Gastrocnemius medialis (tissue), 4 donors: ENCODE measurements at regions of chr2 and their contacts with region 1.

Region 1: DNA sequence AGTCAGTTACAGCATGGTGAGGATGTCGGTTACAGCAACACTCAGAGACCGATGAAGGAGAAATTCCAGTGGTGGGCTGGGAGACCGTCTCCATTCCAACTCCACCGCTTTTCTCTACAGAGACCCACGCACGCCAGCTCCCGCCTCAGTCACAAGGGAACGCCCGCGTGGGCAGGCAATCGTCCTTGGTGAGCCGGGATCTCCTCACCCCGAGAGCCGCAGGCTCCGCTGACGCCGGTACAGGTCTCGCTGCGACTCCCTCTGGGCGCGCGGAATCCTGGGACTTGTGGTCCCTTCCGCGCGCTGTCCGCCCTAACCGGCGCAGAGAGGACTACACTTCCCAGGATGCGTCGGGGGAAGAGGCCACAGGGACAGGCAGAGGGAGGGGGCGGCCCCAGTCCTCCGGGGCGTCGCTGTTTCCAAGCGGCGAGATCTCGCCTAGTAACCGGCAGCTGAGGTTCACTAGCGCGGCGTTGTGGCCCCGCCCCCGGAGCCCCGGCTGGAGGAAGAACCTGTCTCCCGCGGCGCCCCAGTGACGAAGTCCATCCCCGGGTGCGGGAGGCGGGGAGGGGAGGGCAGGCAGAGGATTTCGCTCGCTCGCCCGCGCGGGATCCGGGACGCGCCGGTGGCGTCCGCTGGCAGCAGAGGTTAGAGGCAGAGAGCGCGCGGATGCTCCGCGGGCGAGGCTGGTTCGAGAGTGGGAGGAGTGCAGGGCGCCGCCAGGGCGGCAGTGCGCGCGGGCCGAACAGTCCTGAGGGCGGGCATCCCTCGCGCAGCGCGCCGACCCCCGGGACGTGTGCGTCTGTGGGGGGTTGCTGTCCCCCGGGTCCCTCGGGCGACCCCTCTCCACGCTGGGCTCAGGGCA is at the start of gene EML6:
- DNase-seq: peak; percentile 97 to 98
- ATAC-seq: peak; percentile 96 to 98
- H3K4me3 ChIP-seq: peak within 1 kb of the TSS; percentile 60 to 88 (median 76)
- H3K27ac ChIP-seq: peak within 1 kb of the TSS; percentile 79 to 86 (median 82)
- H3K4me1 ChIP-seq: peaks cover 7 to 11% of the 10 kb centered on the region in 2 donors
- H3K27me3 ChIP-seq: no peaks in the 10 kb centered on the region
- CTCF ChIP-seq: peak in 3 of 5 experiments; percentile 6 to 35 (median 28)
- POLR2A ChIP-seq: peak; percentile 53 to 78
- total RNA-seq, gene EML6: 2.7 to 42.5 (median 11.9) TPM

Region 2: DNA sequence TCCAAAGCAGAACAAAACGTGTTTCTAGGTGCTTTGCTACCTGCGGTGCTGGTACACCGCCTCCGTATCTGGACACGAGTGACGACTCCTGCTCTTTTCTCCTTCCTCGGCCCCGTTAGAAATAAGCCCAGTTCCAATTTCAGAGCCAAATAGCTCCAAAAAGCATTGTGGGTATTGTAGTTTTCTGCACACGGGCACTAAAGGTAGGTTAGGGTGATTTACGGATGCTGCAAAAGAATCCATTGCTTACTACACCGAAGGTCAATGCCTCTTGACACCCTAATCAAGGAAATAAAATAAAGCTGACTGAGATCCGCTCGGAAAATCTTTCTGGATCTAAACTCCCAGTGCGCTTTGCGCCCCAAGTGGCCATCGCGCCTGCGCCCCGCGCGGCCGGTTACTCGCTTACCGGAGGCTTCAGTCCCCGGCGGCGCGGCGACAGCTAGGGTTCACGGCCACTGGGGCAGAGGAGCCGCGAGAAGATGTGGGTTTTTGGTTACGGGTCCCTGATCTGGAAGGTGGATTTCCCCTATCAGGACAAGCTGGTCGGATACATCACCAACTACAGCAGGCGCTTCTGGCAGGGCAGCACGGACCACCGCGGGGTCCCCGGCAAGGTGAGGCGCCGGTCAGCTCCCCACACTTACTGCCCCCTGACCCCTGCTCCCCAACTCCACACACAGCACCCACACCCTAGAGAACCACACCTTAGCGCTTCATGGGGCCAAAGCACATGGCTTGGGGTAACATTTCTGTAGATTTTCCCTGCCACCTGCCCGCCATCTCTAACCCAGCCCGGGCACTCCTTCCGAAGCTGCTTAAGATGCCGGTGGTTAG is 955.7 kb before region 1 on chr2 and contains the start of gene CHAC2:
- in situ Hi-C with region 1: no loop called
- intact Hi-C with region 1: loop called (anchors 10 kb)
- DNase-seq: peak; percentile 73 to 84
- ATAC-seq: peak; percentile 96 to 98
- H3K4me3 ChIP-seq: peak within 1 kb of the TSS; percentile 66 to 92 (median 71)
- H3K27ac ChIP-seq: peak within 1 kb of the TSS; percentile 82 to 89 (median 84)
- H3K4me1 ChIP-seq: peaks cover 6 to 14% of the 10 kb centered on the region in 2 donors
- H3K27me3 ChIP-seq: no peaks in the 10 kb centered on the region
- CTCF ChIP-seq: peak; percentile 23 to 69 (median 42)
- POLR2A ChIP-seq: peak; percentile 61 to 79
- total RNA-seq, gene CHAC2: 3.7 to 10.3 (median 6.0) TPM

Region 3: DNA sequence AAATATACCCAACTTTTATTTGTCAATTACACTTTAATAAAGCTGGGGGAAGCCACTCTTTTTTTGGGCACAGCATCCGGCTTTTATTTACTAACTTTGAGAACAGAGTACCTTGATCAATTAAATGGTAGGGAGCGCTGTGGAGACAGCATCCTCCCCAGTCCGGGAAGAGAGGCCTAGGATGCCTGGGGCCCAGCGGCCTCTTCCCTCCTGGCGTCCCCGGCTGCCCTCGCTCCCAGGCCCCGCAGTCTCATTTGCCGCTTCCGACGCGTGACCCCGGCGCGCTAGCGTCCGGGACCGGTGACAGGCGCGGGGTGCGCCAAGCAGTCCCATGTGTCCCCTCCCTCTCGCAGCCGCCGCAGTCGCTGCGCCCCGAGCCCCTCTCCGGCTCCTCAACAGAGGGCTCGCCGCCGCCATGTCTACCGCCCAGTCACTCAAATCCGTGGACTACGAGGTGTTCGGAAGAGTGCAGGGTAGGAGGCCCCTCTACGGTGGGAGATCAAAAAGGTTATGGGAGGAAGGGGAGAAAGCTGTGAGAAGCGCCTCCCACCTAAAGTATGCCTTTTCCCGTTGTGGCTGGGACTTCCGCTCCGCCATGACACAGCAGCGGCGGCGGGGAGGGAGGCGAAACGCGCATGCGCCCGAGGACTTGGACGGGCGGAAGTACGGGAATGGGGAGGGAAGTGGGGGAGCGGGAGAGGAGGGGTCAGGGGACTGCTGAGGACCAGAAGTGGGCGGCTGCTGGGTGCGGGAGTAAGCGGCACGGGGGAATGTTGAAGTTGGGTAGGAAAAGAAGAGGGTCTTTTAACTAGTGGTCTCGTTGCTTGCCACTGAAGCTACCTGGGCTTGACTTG is 607.9 kb before region 1 on chr2 and contains the start of gene ACYP2:
- in situ Hi-C with region 1: loop called in 1 of 4 experiments (anchors 25 kb)
- intact Hi-C with region 1: loop called (anchors 5 kb)
- DNase-seq: peak; percentile 94 to 95
- ATAC-seq: peak; percentile 96 to 98
- H3K4me3 ChIP-seq: peak within 1 kb of the TSS; percentile 70 to 89 (median 76)
- H3K27ac ChIP-seq: peak within 1 kb of the TSS; percentile 97 to 99 (median 98)
- H3K4me1 ChIP-seq: peaks cover 10 to 16% of the 10 kb centered on the region in 2 donors
- H3K27me3 ChIP-seq: no peaks in the 10 kb centered on the region
- CTCF ChIP-seq: no peak
- POLR2A ChIP-seq: peak; percentile 83 to 85
- total RNA-seq, gene ACYP2: 52.9 to 121 (median 107) TPM

Region 4: GRCh38 chr2:54176577-54176976 is 546.8 kb before region 1 on chr2:
- in situ Hi-C with region 1: loop called in 2 of 4 experiments (anchors 25 kb)
- intact Hi-C with region 1: no loop called
- DNase-seq: no peak
- ATAC-seq: peak in 1 of 2 donors; percentile 39
- H3K4me3 ChIP-seq: no peak overlapping the region
- H3K27ac ChIP-seq: no peak overlapping the region
- H3K4me1 ChIP-seq: no peaks in the 10 kb centered on the region
- H3K27me3 ChIP-seq: no peaks in the 10 kb centered on the region
- CTCF ChIP-seq: peak in 3 of 5 experiments; percentile 10 to 40 (median 25)
- POLR2A ChIP-seq: no peak

Region 5: DNA sequence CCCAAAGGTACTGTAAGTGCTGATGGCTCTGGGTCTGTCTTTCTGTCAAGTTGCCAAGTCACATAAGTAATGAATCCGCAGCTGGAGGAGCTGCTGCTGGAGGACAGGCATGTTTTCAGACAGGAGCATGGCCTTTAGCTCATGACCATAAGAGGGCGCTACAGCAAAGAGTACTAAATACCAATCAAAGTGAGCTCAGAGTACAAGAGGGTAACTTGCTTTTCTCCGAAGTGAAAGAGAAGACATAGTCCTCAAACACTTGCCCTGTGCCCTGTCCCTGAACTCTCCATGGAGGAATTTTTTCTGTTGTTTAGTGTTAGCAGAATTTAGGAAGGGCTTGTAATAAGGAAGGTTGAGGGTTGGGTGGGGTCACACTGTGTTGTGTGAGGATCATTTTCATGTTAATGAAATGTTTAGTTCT is 57.9 kb before region 1 on chr2:
- in situ Hi-C with region 1: no loop called
- intact Hi-C with region 1: no loop called
- DNase-seq: no peak
- ATAC-seq: peak in 1 of 2 donors; percentile 44
- H3K4me3 ChIP-seq: no peak overlapping the region
- H3K27ac ChIP-seq: peak overlapping the region; percentile 67 to 73 (median 71)
- H3K4me1 ChIP-seq: peaks cover 36 to 44% of the 10 kb centered on the region in 2 donors
- H3K27me3 ChIP-seq: no peaks in the 10 kb centered on the region
- CTCF ChIP-seq: peak in 4 of 5 experiments; percentile 38 to 65 (median 54)
- POLR2A ChIP-seq: no peak

Region 6: GRCh38 chr2:54838585-54839035 is 115.2 kb after region 1 on chr2:
- in situ Hi-C with region 1: no loop called
- intact Hi-C with region 1: loop called (anchors 5 kb)
- DNase-seq: peak; percentile 15 to 41
- ATAC-seq: peak; percentile 66 to 90
- H3K4me3 ChIP-seq: no peak overlapping the region
- H3K27ac ChIP-seq: no peak overlapping the region
- H3K4me1 ChIP-seq: no peaks in the 10 kb centered on the region
- H3K27me3 ChIP-seq: no peaks in the 10 kb centered on the region
- CTCF ChIP-seq: peak; percentile 64 to 90 (median 79)
- POLR2A ChIP-seq: no peak